HepG2 (cell line): ENCODE measurements at regions of chr4 and their contacts with region 1.

Region 1: GRCh38 chr4:166386491-166387360 is 513.7 kb downstream of the TLL1 start:
- DNase-seq: no peak
- ATAC-seq: no peak
- H3K4me3 ChIP-seq: no peak overlapping the region
- H3K27ac ChIP-seq: no peak overlapping the region
- H3K4me1 ChIP-seq: no peaks in the 10 kb centered on the region
- H3K27me3 ChIP-seq: no peaks in the 10 kb centered on the region
- CTCF ChIP-seq: no peak
- EP300 ChIP-seq: no peak
- POLR2A ChIP-seq: no peak
- RAD21 ChIP-seq: no peak

Region 2: GRCh38 chr4:165656829-165657490 is 729.8 kb before region 1 on chr4:
- CTCF ChIA-PET with region 1: no interaction called
- POLR2A ChIA-PET with region 1: no interaction called
- in situ Hi-C with region 1: no loop called
- intact Hi-C with region 1: no loop called
- DNase-seq: no peak
- ATAC-seq: no peak
- H3K4me3 ChIP-seq: no peak overlapping the region
- H3K27ac ChIP-seq: no peak overlapping the region
- H3K4me1 ChIP-seq: peaks cover 44% of the 10 kb centered on the region
- H3K27me3 ChIP-seq: no peaks in the 10 kb centered on the region
- CTCF ChIP-seq: no peak
- EP300 ChIP-seq: no peak
- POLR2A ChIP-seq: no peak
- RAD21 ChIP-seq: no peak

Region 3: GRCh38 chr4:166655696-166656095 is 269.0 kb after region 1 on chr4:
- CTCF ChIA-PET with region 1: no interaction called
- POLR2A ChIA-PET with region 1: no interaction called
- in situ Hi-C with region 1: no loop called
- intact Hi-C with region 1: no loop called
- DNase-seq: no peak
- ATAC-seq: no peak
- H3K4me3 ChIP-seq: no peak overlapping the region
- H3K27ac ChIP-seq: no peak overlapping the region
- H3K4me1 ChIP-seq: no peaks in the 10 kb centered on the region
- H3K27me3 ChIP-seq: no peaks in the 10 kb centered on the region; a peak in 1 of 5 replicates
- CTCF ChIP-seq: no peak
- EP300 ChIP-seq: no peak
- POLR2A ChIP-seq: no peak
- RAD21 ChIP-seq: no peak

Region 4: DNA sequence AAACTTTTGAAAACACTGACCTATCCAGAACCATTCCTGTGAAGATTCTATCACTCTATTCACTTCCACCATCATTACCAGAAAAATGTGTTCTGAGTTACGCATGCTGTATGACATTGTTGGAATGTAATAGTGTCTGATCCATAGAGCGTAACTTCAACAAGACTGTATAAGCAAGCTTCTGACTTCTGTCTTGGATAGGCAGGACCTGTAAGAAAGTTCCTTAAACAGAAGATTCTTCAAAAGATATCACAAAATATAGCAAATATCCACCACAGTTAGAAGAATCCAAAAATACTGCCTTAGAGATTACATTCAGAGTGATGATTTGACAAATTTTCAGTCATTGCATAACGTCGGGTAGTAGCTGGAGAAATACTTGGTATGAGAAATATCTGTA is 861.5 kb after region 1 on chr4:
- CTCF ChIA-PET with region 1: no interaction called
- POLR2A ChIA-PET with region 1: no interaction called
- in situ Hi-C with region 1: no loop called
- intact Hi-C with region 1: loop called (anchors 5 kb)
- DNase-seq: no peak
- ATAC-seq: no peak
- H3K4me3 ChIP-seq: no peak overlapping the region
- H3K27ac ChIP-seq: no peak overlapping the region
- H3K4me1 ChIP-seq: no peaks in the 10 kb centered on the region
- H3K27me3 ChIP-seq: no peaks in the 10 kb centered on the region
- CTCF ChIP-seq: no peak
- EP300 ChIP-seq: no peak
- POLR2A ChIP-seq: no peak
- RAD21 ChIP-seq: no peak